Posterior cingulate gyrus (tissue), 11 donors: ENCODE measurements at regions of chr9 and their contacts with region 1.

Region 1: GRCh38 chr9:83219152-83219923 is 156.4 kb upstream of the RASEF start:
- DNase-seq: peak; percentile 42 to 96 (median 74)

Region 2: DNA sequence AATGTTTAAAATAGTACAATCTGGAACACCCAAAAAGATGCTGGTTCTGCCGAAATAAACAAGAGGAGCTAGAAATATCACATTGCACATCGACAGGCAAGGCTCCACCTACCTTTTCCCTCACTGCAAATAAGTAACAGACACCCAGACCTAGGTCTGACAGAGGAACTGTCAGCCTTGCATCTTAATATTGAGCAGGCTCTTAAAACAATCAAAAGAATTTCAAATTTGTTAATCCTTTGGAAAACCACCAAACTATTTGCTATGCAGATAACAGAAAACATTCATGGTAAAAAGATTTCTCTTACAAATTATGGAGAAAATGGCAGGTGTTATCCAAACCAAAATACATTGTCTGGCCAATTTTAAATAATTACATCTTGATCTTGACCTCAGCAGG is 247.5 kb after region 1 on chr9:
- intact Hi-C with region 1: no loop called
- DNase-seq: no peak

Region 3: DNA sequence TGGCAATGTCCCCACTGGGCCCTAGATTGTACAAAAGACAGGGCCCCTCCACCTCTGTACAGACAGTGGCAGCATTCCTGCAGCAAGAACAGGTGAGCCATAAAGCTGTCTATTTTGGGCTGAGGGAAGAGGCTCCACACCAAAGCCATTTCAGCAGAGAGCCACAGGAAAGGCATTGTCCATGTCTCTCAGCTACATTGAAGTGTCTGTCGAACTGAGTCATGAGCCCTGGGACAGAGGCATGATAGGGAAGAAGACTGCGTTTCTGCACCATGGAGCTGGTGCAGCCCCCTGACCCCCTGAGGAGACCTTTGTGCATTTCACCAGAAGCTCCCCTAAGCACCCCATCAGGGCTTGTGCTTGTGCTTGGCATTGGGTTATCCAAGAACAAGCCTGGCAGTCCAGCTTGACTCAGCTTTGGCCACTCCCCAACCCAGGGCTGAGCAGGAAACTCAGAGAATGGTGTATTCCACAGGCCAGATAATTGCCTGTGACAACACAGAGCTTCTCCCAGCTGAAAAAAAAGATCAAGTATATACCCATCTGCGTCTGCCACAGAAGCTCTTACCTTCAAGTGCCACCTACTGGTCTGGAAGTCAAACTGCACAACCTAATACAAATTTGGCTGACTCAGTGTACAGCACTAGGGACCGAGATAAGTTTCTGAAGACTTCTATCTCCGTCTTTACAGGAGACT is 324.8 kb after region 1 on chr9:
- intact Hi-C with region 1: loop called (anchors 2 kb)
- DNase-seq: no peak

Region 4: GRCh38 chr9:83596896-83597504 is 377.7 kb after region 1 on chr9:
- intact Hi-C with region 1: loop called (anchors 5 kb)
- DNase-seq: peak in 4 of 10 donors; percentile 26 to 87 (median 50)